ENCODE measurements at regions of chr6 and their contacts with region 1.

Region 1: GRCh38 chr6:138115877-138116660 is 8.8 kb upstream of the PERP start:
- DNase-seq: peak; percentile 51
- H3K4me3 ChIP-seq: no peak overlapping the region; a peak in 1 of 4 replicates
- H3K27ac ChIP-seq: no peak overlapping the region
- H3K4me1 ChIP-seq: no peaks in the 10 kb centered on the region
- H3K27me3 ChIP-seq: peaks cover 16% of the 10 kb centered on the region; the same call in 1 of the 2 replicates
- CTCF ChIP-seq: peak; percentile 71
- EP300 ChIP-seq: no peak
- RAD21 ChIP-seq: peak; percentile 87

Region 2: GRCh38 chr6:138403801-138404661 is 288.0 kb after region 1 on chr6 and contains the start of gene HEBP2:
- CTCF ChIA-PET with region 1: interaction called, 14 read pairs
- POLR2A ChIA-PET with region 1: no interaction called
- DNase-seq: peak; percentile 96
- H3K4me3 ChIP-seq: peak within 1 kb of the TSS; percentile 74
- H3K27ac ChIP-seq: peak within 1 kb of the TSS in 1 of 2 experiments; percentile 30; a peak in 1 of 4 replicates
- H3K4me1 ChIP-seq: peaks cover 0 to 8% of the 10 kb centered on the region in 2 experiments; a peak in 1 of 4 replicates
- H3K27me3 ChIP-seq: no peaks in the 10 kb centered on the region
- CTCF ChIP-seq: peak; percentile 52
- EP300 ChIP-seq: no peak
- RAD21 ChIP-seq: peak; percentile 34
- polyA plus RNA-seq, gene HEBP2: 4.8 and 7.6 TPM in 2 replicates

Region 3: DNA sequence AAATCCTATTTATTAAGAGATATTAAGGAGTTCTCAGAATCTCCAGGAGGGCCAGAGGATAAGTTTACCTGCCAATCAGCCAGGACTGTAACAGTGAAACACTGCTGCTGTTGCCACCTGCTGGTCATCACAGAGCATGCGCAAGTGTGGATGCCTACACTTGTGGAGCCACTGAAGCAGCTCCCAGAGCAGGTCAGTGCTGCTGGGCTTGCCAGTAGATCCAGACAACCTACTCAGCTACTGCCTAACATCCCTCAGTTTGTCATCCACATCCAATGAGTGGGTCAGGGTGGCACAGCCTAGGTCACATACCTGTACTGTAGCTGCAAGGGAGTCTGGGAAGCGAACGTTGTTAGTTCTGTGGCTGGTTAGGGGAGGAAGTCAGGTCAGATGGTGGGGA is 401.6 kb after region 1 on chr6:
- CTCF ChIA-PET with region 1: interaction called, 42 read pairs
- POLR2A ChIA-PET with region 1: no interaction called
- DNase-seq: peak; percentile 4
- H3K4me3 ChIP-seq: no peak overlapping the region
- H3K27ac ChIP-seq: no peak overlapping the region
- H3K4me1 ChIP-seq: no peaks in the 10 kb centered on the region
- H3K27me3 ChIP-seq: peaks cover 24% of the 10 kb centered on the region
- CTCF ChIP-seq: peak; percentile 44; the same call in 1 of the 2 replicates
- EP300 ChIP-seq: no peak
- RAD21 ChIP-seq: peak; percentile 14; the same call in 1 of the 2 replicates

Measured in SK-N-SH (cell line).